ENCODE measurements at regions of chr5 and their contacts with region 1.

Region 1: DNA sequence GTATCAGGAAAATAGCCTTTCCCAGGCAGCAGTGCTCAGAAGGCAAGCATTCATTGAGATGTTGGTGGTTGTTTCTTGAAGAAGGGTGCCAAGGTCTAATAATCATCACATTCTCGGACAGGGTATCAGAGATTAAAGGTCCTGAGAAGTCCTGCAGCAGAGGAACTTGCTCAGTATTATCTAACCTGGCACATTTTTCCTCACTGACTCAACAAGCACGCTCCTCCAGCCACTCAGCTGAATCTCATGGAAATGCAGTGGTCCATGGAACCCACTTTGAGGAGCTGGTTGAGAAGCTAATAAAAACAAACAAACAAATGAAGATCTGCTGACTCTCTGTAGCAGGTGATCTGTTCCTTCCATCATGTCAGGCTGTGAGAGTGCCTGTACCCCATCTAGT is 35.3 kb upstream of the ICE1 start:
- DNase-seq: no peak
- H3K4me3 Mint-ChIP-seq: no peak overlapping the region
- H3K27ac Mint-ChIP-seq: no peak overlapping the region
- H3K4me1 Mint-ChIP-seq: no peaks in the 10 kb centered on the region
- H3K27me3 Mint-ChIP-seq: no peaks in the 10 kb centered on the region

Region 2: DNA sequence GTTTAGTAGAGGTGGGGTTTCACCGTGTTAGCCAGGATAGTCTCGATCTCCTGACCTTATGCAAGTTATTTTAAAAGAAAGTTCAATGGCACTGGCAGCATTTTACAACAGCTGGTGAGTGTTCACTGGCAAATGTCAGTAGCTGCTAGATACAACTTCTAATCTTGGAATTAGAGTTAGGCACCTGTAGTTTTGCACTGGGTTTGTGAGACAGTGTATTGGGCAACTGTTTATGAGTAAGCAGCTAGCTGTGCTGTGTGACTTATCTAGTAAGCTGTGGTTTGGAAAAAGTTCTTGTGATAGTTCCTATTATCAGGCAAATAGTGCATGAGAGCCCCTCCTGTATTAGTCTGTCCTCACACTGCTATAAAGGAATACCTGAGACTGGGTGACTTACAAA is 1122.9 kb after region 1 on chr5:
- intact Hi-C with region 1: loop called (anchors 5 kb)
- DNase-seq: no peak
- H3K4me3 Mint-ChIP-seq: no peak overlapping the region
- H3K27ac Mint-ChIP-seq: no peak overlapping the region
- H3K4me1 Mint-ChIP-seq: no peaks in the 10 kb centered on the region
- H3K27me3 Mint-ChIP-seq: peaks cover 11% of the 10 kb centered on the region